Astrocyte of the cerebellum (primary cell): ENCODE measurements at regions of chr18 and their contacts with region 1.

Region 1: DNA sequence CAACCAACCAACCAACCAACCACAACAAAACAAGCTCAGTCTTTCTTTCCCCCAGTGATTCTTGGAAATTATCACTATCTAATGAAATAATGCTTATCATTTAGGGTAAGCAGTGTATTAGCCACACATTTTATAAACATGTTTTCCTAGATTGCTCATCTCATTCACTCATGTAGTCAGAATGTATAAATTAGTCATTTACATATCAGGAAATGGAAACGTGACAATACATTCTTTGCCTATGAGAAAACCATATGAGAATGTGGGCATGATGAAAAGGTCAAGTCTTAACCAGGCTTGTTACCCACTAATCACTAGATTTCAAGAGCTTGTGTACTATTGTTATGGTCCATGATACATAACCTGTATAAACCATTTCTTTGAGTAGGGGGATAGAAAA is 1583.4 kb upstream of the PIK3C3 start:
- DNase-seq: peak; percentile 5
- H3K4me3 ChIP-seq: no peak overlapping the region
- CTCF ChIP-seq: no peak

Region 2: DNA sequence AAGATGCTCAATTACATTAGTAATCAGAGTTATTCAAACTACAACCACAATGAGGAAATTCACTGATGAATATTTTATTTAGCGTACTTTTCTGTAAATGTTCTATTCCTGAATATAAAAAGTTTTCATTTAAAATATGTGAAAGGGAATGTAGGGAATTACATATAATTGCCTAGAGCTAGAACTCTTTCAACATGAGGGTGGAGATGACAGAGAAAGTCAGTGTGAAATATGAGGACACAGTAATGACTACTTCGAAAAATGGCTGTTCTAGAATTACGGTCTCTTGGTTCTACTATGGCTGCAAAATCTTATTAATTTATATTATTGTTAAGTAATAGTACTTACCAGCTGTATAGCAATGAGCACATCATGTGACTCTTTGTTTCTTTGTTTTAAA is 64.0 kb before region 1 on chr18:
- in situ Hi-C with region 1: no loop called
- DNase-seq: no peak
- H3K4me3 ChIP-seq: no peak overlapping the region
- CTCF ChIP-seq: no peak

Region 3: GRCh38 chr18:40447820-40448219 is 76.1 kb after region 1 on chr18:
- in situ Hi-C with region 1: loop called (anchors 5 kb)
- DNase-seq: no peak
- H3K4me3 ChIP-seq: no peak overlapping the region
- CTCF ChIP-seq: no peak

Region 4: GRCh38 chr18:40662898-40663437 is 291.3 kb after region 1 on chr18:
- in situ Hi-C with region 1: no loop called
- DNase-seq: no peak
- H3K4me3 ChIP-seq: no peak overlapping the region
- CTCF ChIP-seq: no peak